ENCODE measurements at regions of chr3 and their contacts with region 1.

Region 1: GRCh38 chr3:179147873-179148615 is at the start of gene PIK3CA:
- DNase-seq: peak; percentile 93
- H3K4me3 Mint-ChIP-seq: peak within 1 kb of the TSS; percentile 97
- H3K27ac Mint-ChIP-seq: peak within 1 kb of the TSS; percentile 94
- H3K4me1 Mint-ChIP-seq: peaks cover 23% of the 10 kb centered on the region
- H3K27me3 Mint-ChIP-seq: peaks cover 25% of the 10 kb centered on the region
- total RNA-seq, gene PIK3CA: 16.3 and 19.6 TPM in 2 replicates

Region 2: GRCh38 chr3:179071550-179072397 is 76.3 kb before region 1 on chr3 and contains the start of gene ZMAT3:
- intact Hi-C with region 1: loop called (anchors 1 kb)
- DNase-seq: peak; percentile 83
- H3K4me3 Mint-ChIP-seq: peak within 1 kb of the TSS; percentile 98
- H3K27ac Mint-ChIP-seq: peak within 1 kb of the TSS; percentile 94
- H3K4me1 Mint-ChIP-seq: peaks cover 31% of the 10 kb centered on the region
- H3K27me3 Mint-ChIP-seq: no peaks in the 10 kb centered on the region
- total RNA-seq, gene ZMAT3: 8.9 and 10.6 TPM in 2 replicates

Region 3: DNA sequence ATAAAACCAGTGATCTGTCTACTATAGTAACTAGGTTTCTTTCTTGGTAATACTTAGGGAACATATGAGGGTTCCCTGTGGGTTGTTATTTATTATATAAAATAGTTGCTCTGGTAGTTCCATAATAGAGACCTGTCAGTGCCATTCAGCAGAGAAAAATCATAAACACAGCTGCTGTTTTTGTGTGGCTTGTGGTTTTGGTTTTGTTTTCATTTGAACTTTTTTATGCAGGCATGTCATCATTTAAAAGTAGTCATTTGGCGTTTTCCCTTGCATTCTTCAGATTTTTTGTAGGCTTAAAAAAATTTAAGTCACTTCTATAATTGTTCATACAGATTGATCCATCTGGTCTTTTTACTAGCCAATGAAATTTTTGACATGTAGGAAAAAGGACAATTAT is 48.1 kb after region 1 on chr3:
- intact Hi-C with region 1: loop called (anchors 1 kb)
- DNase-seq: no peak
- H3K4me3 Mint-ChIP-seq: no peak overlapping the region
- H3K27ac Mint-ChIP-seq: no peak overlapping the region
- H3K4me1 Mint-ChIP-seq: peaks cover 23% of the 10 kb centered on the region
- H3K27me3 Mint-ChIP-seq: no peaks in the 10 kb centered on the region

Region 4: DNA sequence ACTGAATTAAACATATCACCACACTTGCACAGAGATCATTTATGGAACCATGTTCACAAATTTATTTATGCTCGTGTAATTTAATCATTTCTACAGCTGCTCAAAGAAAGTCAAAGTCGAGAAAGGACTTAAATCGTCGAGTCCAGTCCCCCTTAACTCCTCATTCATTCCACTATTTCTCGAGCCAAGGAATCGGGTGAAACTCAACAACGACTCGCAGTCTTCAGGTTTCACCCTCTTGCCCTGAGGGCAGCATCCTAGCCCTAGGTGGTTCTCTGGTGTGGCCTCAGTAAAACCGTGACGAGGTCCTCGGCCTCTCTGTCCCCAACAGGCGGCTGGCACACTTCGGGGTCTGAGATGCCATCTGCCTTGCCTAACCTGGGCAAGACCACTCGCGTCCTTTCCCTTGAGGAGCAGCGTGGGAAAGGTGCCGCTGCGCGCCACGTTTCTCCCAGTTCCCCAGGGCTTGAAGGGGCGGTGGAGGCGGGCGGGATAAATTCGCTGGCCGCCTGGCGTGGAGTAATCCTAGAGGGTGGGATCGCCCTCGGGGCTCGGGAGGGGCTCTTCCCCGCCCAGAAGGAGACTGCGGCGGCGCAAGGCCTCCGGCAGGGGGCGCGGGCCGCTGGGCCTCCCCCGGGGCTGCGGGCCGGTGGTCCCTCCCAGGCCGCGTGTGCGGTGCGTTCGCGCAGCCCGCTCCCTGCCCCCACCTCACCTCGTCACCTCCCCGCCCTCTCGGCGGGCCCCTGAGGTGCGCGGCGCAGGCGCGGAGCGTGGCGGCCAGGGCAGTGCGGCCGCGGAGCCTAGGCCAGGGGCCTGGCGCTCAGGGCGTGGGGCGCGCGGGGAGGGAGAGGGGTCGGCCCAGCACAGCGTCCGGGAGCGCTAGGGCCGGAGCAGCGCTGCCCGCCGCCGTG is 174.5 kb after region 1 on chr3 and contains the start of gene ZNF639:
- intact Hi-C with region 1: loop called (anchors 1 kb)
- DNase-seq: peak; percentile 75
- H3K4me3 Mint-ChIP-seq: peak within 1 kb of the TSS; percentile 93
- H3K27ac Mint-ChIP-seq: peak within 1 kb of the TSS; percentile 97
- H3K4me1 Mint-ChIP-seq: peaks cover 25% of the 10 kb centered on the region
- H3K27me3 Mint-ChIP-seq: peaks cover 11% of the 10 kb centered on the region
- total RNA-seq, gene ZNF639: 34.3 and 38.7 TPM in 2 replicates

Region 5: GRCh38 chr3:179562591-179563270 is 414.7 kb after region 1 on chr3 and contains the start of gene ACTL6A:
- intact Hi-C with region 1: loop called (anchors 1 kb)
- DNase-seq: peak; percentile 98
- H3K4me3 Mint-ChIP-seq: peak within 1 kb of the TSS; percentile 98
- H3K27ac Mint-ChIP-seq: peak within 1 kb of the TSS; percentile 98
- H3K4me1 Mint-ChIP-seq: peaks cover 30% of the 10 kb centered on the region
- H3K27me3 Mint-ChIP-seq: peaks cover 14% of the 10 kb centered on the region
- total RNA-seq, gene ACTL6A: 114 and 121 TPM in 2 replicates

Measured in activated T-helper 2 cell treated with anti-CD3 and anti-CD28 coated beads, Interferon-gamma antibody, Interleukin-2, Interleukin-4, amounts not matched to agents 10 μg/mL and 5 μg/mL and 100 μg/mL, durations not matched to agents 14 hours and 24 hours and 36 hours (primary cell).